Activated CD4-positive, alpha-beta memory T cell treated with anti-CD3 and anti-CD28 coated beads for 36 hours (primary cell): ENCODE measurements at regions of chr13 and their contacts with region 1.

Region 1: DNA sequence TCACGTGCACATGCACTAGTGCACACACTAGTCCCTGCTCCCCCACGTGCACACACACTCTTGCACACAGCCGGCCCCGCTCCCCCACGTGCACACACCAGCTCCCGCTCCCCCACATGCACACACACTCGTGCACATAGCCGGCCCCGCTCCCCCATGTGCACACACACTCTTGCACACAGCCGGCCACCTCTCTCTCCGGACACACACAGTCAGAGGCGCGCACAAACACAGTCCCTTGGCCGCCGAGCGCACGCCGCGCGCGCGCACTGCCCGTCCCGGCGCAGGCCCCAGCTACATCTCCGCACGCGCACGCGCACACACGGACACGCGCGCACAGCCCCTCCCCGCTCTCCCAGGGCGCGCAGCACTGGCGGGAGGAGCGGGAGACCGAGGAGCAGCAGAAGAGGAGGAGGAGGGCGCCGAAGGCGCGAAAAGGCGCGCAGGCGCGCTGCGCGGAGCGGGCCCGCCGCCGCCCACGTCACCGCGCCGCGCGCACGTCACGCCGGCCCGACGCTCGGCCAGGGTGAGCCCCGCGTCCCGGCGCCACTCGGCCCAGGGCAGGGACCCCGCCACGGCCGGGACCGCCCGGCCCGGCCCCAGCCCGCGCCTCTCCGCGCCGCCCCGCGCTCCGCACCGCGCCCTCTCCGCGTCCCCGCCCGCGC is at the start of gene TFDP1:
- DNase-seq: peak; percentile 89
- H3K4me3 Mint-ChIP-seq: peak within 1 kb of the TSS; percentile 85
- H3K27ac Mint-ChIP-seq: peak within 1 kb of the TSS; percentile 77
- H3K4me1 Mint-ChIP-seq: peaks cover 38% of the 10 kb centered on the region
- H3K27me3 Mint-ChIP-seq: no peaks in the 10 kb centered on the region
- total RNA-seq, gene TFDP1: 149 to 156 TPM

Region 2: GRCh38 chr13:113490496-113491417 is 93.6 kb before region 1 on chr13 and contains the start of gene DCUN1D2:
- CTCF ChIA-PET with region 1: no interaction called
- POLR2A ChIA-PET with region 1: no interaction called
- intact Hi-C with region 1: loop called (anchors 10 kb)
- DNase-seq: peak; percentile 81
- H3K4me3 Mint-ChIP-seq: peak within 1 kb of the TSS; percentile 96
- H3K27ac Mint-ChIP-seq: peak within 1 kb of the TSS; percentile 85
- H3K4me1 Mint-ChIP-seq: peaks cover 59% of the 10 kb centered on the region
- H3K27me3 Mint-ChIP-seq: no peaks in the 10 kb centered on the region
- total RNA-seq, gene DCUN1D2: 14.4 to 15.8 TPM